A549 (cell line): ENCODE measurements at regions of chr7 and their contacts with region 1.

Region 1: GRCh38 chr7:28020302-28020940 is 160.2 kb downstream of the JAZF1 start:
- DNase-seq: peak; percentile 86
- ATAC-seq: peak; percentile 96 to 98
- H3K4me3 ChIP-seq: no peak overlapping the region
- H3K27ac ChIP-seq: peak overlapping the region; percentile 66 to 78
- H3K4me1 ChIP-seq: peaks cover 20% of the 10 kb centered on the region; the same call in 2 of the 3 replicates
- CTCF ChIP-seq: peak; percentile 95
- EP300 ChIP-seq: no peak
- POLR2A ChIP-seq: no peak
- RAD21 ChIP-seq: peak; percentile 98

Region 2: GRCh38 chr7:27210441-27211083 is 809.9 kb before region 1 on chr7:
- CTCF ChIA-PET with region 1: interaction called, 21 read pairs
- POLR2A ChIA-PET with region 1: no interaction called
- DNase-seq: peak; percentile 64 to 79
- ATAC-seq: peak; percentile 91 to 94
- H3K4me3 ChIP-seq: peak overlapping the region; percentile 33
- H3K27ac ChIP-seq: peak overlapping the region; percentile 50 to 69
- H3K4me1 ChIP-seq: peaks cover 12% of the 10 kb centered on the region; the same call in 2 of the 3 replicates
- CTCF ChIP-seq: peak; percentile 67
- EP300 ChIP-seq: no peak
- POLR2A ChIP-seq: no peak
- RAD21 ChIP-seq: peak; percentile 77 to 79

Region 3: DNA sequence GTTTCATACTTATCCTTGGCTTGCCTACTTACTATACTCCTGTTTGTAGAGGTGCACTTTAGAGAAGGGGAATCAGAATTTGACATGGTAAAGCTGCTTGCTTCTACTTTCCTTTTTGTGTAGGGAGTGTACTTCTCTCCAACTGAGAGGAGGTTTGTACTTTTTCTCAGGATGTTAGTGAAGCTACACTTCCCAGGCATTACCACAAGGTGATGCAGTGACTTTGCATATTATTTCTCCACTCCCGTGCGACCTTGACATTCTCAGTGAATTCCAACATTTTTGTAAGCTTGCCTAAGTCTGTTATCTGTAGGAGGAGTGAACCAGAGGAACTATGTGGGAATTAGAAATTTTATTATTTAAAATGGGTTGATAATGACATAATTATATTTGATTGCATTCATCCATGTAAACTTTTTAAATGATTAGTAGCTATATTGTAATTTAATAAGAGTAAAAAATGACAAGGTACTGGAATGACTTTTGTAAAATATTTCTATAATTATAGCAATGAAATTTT is 275.3 kb before region 1 on chr7:
- CTCF ChIA-PET with region 1: interaction called, 10 read pairs
- POLR2A ChIA-PET with region 1: no interaction called
- DNase-seq: peak; percentile 67 to 90
- ATAC-seq: peak; percentile 81 to 86
- H3K4me3 ChIP-seq: no peak overlapping the region; the same call in 2 of the 3 replicates
- H3K27ac ChIP-seq: peak overlapping the region; percentile 61 to 72
- H3K4me1 ChIP-seq: peaks cover 58% of the 10 kb centered on the region
- CTCF ChIP-seq: peak; percentile 88
- EP300 ChIP-seq: no peak
- POLR2A ChIP-seq: no peak
- RAD21 ChIP-seq: peak; percentile 85 to 89

Region 4: GRCh38 chr7:27936047-27936767 is 84.2 kb before region 1 on chr7:
- CTCF ChIA-PET with region 1: interaction called, 15 read pairs
- POLR2A ChIA-PET with region 1: no interaction called
- DNase-seq: no peak
- ATAC-seq: peak in 1 of 2 experiments; percentile 27; a peak in 1 of 6 replicates
- H3K4me3 ChIP-seq: no peak overlapping the region
- H3K27ac ChIP-seq: no peak overlapping the region
- H3K4me1 ChIP-seq: peaks cover 6% of the 10 kb centered on the region; the same call in 1 of the 3 replicates
- CTCF ChIP-seq: no peak
- EP300 ChIP-seq: no peak
- POLR2A ChIP-seq: no peak
- RAD21 ChIP-seq: no peak

Region 5: GRCh38 chr7:28055161-28055544 is 34.7 kb after region 1 on chr7:
- CTCF ChIA-PET with region 1: interaction called, 12 read pairs
- POLR2A ChIA-PET with region 1: no interaction called
- DNase-seq: peak in 1 of 2 experiments; percentile 77
- ATAC-seq: peak; percentile 82 to 91
- H3K4me3 ChIP-seq: no peak overlapping the region; the same call in 2 of the 3 replicates
- H3K27ac ChIP-seq: peak overlapping the region; percentile 87 to 92
- H3K4me1 ChIP-seq: peaks cover 58% of the 10 kb centered on the region
- CTCF ChIP-seq: no peak
- EP300 ChIP-seq: no peak; a peak in 1 of 5 replicates
- POLR2A ChIP-seq: no peak
- RAD21 ChIP-seq: no peak

Region 6: DNA sequence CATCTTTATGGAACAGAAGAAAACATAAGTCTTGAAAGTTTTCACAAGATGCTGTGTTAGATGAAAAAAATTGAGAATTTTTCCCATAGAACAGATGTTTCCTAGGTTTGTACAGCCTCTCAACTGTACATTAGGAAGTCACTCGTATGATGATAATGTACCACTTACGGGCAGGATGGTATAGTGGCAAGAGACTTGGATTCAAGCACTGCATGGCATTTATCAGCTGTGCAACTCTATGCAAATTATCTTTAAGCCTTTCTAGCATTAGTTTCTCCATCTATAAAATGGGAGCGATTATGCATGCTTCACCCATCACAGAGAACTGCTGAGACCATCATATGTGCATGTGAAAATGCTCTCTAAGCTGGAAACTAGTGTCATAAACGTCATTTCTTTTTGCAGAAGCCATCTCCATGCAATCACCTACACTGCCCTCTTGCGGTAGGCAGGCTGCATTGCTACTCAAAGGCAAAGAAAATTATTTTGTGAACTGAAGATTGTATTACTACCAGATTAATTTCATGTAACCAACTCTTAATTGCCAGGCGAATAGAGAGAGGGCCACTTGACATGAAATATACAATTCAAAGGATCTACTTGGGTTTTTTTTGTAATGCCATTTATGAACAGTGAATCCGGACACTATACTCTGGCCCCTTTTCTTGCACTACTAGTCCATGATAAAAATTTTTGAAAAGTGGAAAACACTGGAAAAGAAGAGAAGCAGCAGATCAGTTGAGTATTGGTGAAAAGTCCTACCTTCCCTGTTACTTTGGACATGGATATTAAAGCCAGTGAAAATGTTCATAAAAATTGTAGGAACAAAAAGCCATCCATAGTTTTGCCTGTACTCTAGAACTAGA is 57.8 kb after region 1 on chr7:
- CTCF ChIA-PET with region 1: interaction called, 27 read pairs
- POLR2A ChIA-PET with region 1: no interaction called
- DNase-seq: peak; percentile 37 to 69
- ATAC-seq: peak; percentile 75; a peak in 5 of 6 replicates
- H3K4me3 ChIP-seq: no peak overlapping the region
- H3K27ac ChIP-seq: peak overlapping the region; percentile 69 to 71
- H3K4me1 ChIP-seq: peaks cover 37% of the 10 kb centered on the region
- CTCF ChIP-seq: peak; percentile 97
- EP300 ChIP-seq: no peak
- POLR2A ChIP-seq: no peak
- RAD21 ChIP-seq: peak; percentile 85 to 90

Region 7: GRCh38 chr7:28096713-28097112 is 76.3 kb after region 1 on chr7:
- CTCF ChIA-PET with region 1: interaction called, 51 read pairs
- POLR2A ChIA-PET with region 1: no interaction called
- DNase-seq: peak; percentile 63 to 72
- ATAC-seq: peak; percentile 65 to 68; a peak in 3 of 6 replicates
- H3K4me3 ChIP-seq: no peak overlapping the region
- H3K27ac ChIP-seq: no peak overlapping the region
- H3K4me1 ChIP-seq: 0 out of 3 replicates have a peak, but pooled peaks cover 3% of the 10 kb centered on the region
- CTCF ChIP-seq: peak; percentile 92
- EP300 ChIP-seq: no peak
- POLR2A ChIP-seq: no peak
- RAD21 ChIP-seq: peak; percentile 88 to 94